Panc1 (cell line): ENCODE measurements at regions of chr7 and their contacts with region 1.

Region 1: GRCh38 chr7:158353606-158354570 is 233.7 kb downstream of the PTPRN2 start:
- DNase-seq: peak; percentile 38
- ATAC-seq: peak; percentile 72
- H3K4me3 ChIP-seq: no peak overlapping the region
- H3K27ac ChIP-seq: no peak overlapping the region
- H3K4me1 ChIP-seq: no peaks in the 10 kb centered on the region
- H3K27me3 ChIP-seq: peaks cover 10% of the 10 kb centered on the region
- CTCF ChIP-seq: peak; percentile 87

Region 2: DNA sequence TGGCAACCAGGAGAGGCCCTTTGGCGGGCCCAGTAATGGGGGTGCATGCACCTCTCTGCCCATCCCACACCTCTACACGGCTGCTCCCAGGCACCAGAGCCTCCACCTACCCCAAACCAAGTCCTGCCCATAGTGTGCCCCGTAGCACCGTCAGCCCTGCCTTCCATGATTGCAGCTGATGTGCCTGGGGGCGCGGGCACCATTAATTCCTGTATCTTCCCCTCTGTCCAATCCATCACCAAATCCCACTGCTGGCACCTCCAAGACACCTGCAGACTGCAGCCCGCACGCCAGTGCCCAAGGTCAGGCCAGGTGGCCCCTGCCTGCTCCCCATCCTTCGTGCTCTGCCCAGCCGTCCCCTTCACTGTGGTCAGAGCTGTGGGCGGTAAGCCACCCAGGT is 299.3 kb before region 1 on chr7:
- CTCF ChIA-PET with region 1: no interaction called
- POLR2A ChIA-PET with region 1: no interaction called
- in situ Hi-C with region 1: no loop called
- intact Hi-C with region 1: loop called (anchors 2 kb)
- DNase-seq: no peak
- ATAC-seq: no peak
- H3K4me3 ChIP-seq: no peak overlapping the region
- H3K27ac ChIP-seq: no peak overlapping the region
- H3K4me1 ChIP-seq: no peaks in the 10 kb centered on the region
- H3K27me3 ChIP-seq: peaks cover 11% of the 10 kb centered on the region
- CTCF ChIP-seq: no peak

Region 3: GRCh38 chr7:158407581-158408317 is 53.9 kb after region 1 on chr7:
- CTCF ChIA-PET with region 1: interaction called, 4 read pairs
- POLR2A ChIA-PET with region 1: no interaction called
- in situ Hi-C with region 1: no loop called
- intact Hi-C with region 1: loop called (anchors 1 kb)
- DNase-seq: peak; percentile 50
- ATAC-seq: peak; percentile 80
- H3K4me3 ChIP-seq: no peak overlapping the region
- H3K27ac ChIP-seq: no peak overlapping the region
- H3K4me1 ChIP-seq: no peaks in the 10 kb centered on the region
- H3K27me3 ChIP-seq: no peaks in the 10 kb centered on the region
- CTCF ChIP-seq: peak; percentile 66